ENCODE measurements at regions of chr6 and their contacts with region 1.

Region 1: DNA sequence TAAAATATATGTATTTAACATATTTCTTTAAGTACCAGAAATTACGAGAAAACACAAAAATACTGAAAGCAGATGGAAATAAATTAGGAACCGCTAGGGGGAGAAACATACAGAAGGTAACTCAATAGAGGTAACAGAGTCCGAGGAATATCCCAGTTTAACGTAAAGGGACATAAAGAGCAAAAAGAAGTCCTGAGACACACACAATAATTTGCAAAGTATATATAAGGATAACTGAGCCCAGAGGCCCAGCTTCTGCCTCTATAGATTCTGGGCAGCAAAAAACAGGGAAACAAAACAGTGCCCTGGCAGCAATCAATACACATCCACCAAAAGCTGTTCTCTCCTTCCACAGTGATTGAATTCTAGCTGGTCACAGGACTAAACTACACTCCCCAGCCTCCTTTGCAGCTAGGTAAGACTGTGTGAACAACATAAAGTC is 15.1 kb downstream of the TBC1D32 start:
- DNase-seq: peak in 2 of 9 donors; percentile 4 to 17
- ATAC-seq: no peak
- H3K4me3 ChIP-seq: no peak overlapping the region
- H3K4me3 Mint-ChIP-seq: peak overlapping the region in 4 of 10 donors; percentile 46 to 62 (median 56)
- H3K27ac ChIP-seq: no peak overlapping the region
- H3K27ac Mint-ChIP-seq: no peak overlapping the region
- H3K4me1 ChIP-seq: no peaks in the 10 kb centered on the region
- H3K4me1 Mint-ChIP-seq: peaks cover 0 to 5% (median 0%) of the 10 kb centered on the region in 7 donors
- H3K27me3 ChIP-seq: no peaks in the 10 kb centered on the region
- H3K27me3 Mint-ChIP-seq: no peaks in the 10 kb centered on the region

Region 2: GRCh38 chr6:121399966-121400365 is 80.8 kb after region 1 on chr6:
- CTCF ChIA-PET with region 1: interaction called, 3 read pairs
- POLR2A ChIA-PET with region 1: no interaction called
- intact Hi-C with region 1: loop called in 1 of 2 experiments (anchors 1 kb)
- DNase-seq: no peak
- ATAC-seq: no peak
- H3K4me3 ChIP-seq: no peak overlapping the region
- H3K4me3 Mint-ChIP-seq: no peak overlapping the region
- H3K27ac ChIP-seq: no peak overlapping the region
- H3K27ac Mint-ChIP-seq: no peak overlapping the region
- H3K4me1 ChIP-seq: no peaks in the 10 kb centered on the region
- H3K4me1 Mint-ChIP-seq: no peaks in the 10 kb centered on the region
- H3K27me3 ChIP-seq: no peaks in the 10 kb centered on the region
- H3K27me3 Mint-ChIP-seq: peaks cover 0 to 7% (median 5%) of the 10 kb centered on the region in 5 donors

Measured in naive thymus-derived CD4-positive, alpha-beta T cell (primary cell).